G401 (cell line): ENCODE measurements at regions of chr13 and their contacts with region 1.

Region 1: DNA sequence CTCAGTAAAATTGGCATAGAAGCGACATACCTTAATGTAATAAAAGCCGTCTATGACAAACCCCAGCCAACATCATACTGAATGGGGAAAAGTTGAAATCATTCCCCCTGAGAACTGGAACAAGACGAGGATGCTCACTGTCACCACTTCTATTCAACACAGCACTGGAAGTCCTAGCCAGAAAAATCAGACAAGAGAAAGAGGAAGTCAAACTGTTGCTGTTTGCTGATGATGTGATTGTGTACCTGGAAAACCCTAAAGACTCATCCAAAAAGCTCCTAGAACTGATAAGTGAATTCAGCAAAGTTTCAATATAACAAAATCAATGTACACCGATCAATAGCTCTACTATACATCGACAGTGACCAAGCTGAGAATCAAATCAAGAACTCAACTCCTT is 63.3 kb downstream of the TNFSF13B start:
- DNase-seq: no peak

Region 2: DNA sequence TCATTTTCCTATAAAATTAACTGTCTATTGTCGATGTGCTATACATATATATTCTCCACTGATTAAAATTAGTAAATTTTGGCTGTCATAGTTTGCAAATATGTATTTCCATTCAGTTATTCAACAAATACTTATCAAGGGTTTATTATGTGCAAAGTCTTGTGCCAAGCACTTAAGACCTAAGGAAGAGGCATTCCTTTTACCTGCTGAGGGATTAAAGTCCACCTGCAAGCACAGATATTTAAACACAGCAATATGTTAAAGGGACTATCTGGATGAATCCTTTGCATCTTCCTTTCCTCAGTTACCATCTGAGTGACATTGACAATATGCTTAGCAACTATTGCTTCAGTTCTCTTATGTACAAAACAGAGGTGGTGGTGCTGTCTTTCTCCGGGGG is 206.7 kb before region 1 on chr13:
- in situ Hi-C with region 1: no loop called
- DNase-seq: no peak

Region 3: DNA sequence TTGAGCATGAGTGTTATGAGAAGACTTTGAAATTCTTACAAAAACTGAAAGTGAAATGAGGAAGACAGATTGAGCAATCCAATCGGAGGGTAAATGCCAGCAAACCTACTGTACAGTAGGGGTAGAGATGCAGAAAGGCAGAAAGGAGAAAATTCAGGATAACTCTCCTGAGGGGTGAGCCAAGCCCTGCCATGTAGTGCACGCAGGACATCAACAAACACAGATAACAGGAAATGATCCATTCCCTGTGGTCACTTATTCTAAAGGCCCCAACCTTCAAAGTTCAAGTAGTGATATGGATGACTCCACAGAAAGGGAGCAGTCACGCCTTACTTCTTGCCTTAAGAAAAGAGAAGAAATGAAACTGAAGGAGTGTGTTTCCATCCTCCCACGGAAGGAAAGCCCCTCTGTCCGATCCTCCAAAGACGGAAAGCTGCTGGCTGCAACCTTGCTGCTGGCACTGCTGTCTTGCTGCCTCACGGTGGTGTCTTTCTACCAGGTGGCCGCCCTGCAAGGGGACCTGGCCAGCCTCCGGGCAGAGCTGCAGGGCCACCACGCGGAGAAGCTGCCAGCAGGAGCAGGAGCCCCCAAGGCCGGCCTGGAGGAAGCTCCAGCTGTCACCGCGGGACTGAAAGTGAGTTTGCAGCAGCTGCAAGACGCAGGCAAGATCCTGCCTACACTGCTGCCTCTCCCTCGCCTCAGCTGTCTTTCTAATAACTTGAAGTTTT is 63.0 kb before region 1 on chr13 and contains the start of gene TNFSF13B:
- in situ Hi-C with region 1: loop called (anchors 10 kb)
- DNase-seq: peak; percentile 20
- total RNA-seq, gene TNFSF13B: not detected in 2 replicates

Region 4: DNA sequence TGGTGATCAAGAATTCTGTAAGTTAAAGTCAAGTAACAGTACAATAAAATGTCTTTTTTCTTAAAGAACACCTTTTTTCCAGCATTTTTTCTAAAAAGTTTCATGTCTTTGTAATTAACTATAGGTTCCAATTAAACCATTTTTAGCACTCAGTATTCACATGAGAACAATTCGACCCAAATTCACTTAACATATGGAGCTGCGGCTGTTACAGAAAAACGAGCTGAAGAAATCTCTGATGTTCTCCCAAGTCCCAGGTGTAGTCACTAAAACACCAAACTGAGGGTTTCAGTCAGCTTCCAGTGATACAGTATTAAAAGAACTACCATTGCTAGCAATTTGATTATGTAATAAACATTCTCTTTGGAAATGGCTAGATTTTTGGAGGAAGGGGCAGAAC is 54.4 kb after region 1 on chr13:
- in situ Hi-C with region 1: no loop called
- DNase-seq: no peak